ENCODE measurements at regions of chr16 and their contacts with region 1.

Region 1: GRCh38 chr16:1378804-1379303 is 27.1 kb downstream of the GNPTG start:
- DNase-seq: peak in 33 of 35 experiments; percentile 10 to 78 (median 42)
- ATAC-seq: peak; percentile 41 to 69 (median 54)
- H3K4me3 ChIP-seq: peak overlapping the region; percentile 21 to 32
- H3K4me3 Mint-ChIP-seq: peak overlapping the region; percentile 61 to 66 (median 62)
- H3K27ac ChIP-seq: no peak overlapping the region
- H3K27ac Mint-ChIP-seq: peak overlapping the region in 1 of 2 donors; percentile 58
- H3K4me1 ChIP-seq: peaks cover 3 to 20% of the 10 kb centered on the region in 2 experiments
- H3K4me1 Mint-ChIP-seq: peaks cover 15 to 20% (median 16%) of the 10 kb centered on the region in 3 donors
- H3K27me3 ChIP-seq: peaks cover 0 to 2% of the 10 kb centered on the region in 2 experiments
- H3K27me3 Mint-ChIP-seq: no peaks in the 10 kb centered on the region

Region 2: GRCh38 chr16:1119766-1120576 is 258.9 kb before region 1 on chr16:
- CTCF ChIA-PET with region 1: no interaction called
- POLR2A ChIA-PET with region 1: no interaction called
- DNase-seq: no peak
- ATAC-seq: no peak
- H3K4me3 ChIP-seq: no peak overlapping the region
- H3K4me3 Mint-ChIP-seq: no peak overlapping the region
- H3K27ac ChIP-seq: no peak overlapping the region
- H3K27ac Mint-ChIP-seq: no peak overlapping the region
- H3K4me1 ChIP-seq: no peaks in the 10 kb centered on the region
- H3K4me1 Mint-ChIP-seq: no peaks in the 10 kb centered on the region
- H3K27me3 ChIP-seq: peaks cover 0 to 61% of the 10 kb centered on the region in 2 experiments
- H3K27me3 Mint-ChIP-seq: peaks cover 0 to under 1% of the 10 kb centered on the region in 2 donors

Region 3: DNA sequence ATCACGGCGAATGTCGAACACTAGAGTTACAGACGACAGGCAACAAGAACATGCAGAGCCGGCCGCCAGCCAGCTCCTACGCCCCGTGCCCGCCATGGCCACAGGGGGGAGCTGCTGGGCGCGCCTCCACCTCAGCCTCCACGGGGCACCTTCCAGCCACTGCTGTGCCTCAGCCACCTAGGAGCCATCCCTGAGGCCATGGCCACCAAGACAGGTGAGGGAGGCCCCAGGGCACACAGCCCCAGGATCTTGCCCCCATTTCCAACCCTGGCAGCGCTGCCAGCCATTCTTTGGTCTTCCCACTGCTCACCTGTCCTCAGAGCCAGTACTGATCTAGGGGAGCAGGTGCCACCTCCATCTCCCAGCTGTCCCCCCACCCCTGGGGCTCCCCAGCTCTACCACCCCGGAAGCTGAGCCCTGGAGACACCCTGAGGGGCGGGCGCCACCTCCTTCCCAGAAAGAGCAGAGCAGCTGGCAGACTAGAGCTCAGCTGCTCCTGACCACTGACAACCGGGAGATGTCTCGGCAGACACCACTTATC is 15.3 kb before region 1 on chr16:
- CTCF ChIA-PET with region 1: interaction called, 3 to 7 read pairs
- POLR2A ChIA-PET with region 1: interaction called in 1 of 2 experiments, 12 read pairs
- DNase-seq: peak in 34 of 35 experiments; percentile 34 to 78 (median 61)
- ATAC-seq: peak; percentile 88 to 93 (median 90)
- H3K4me3 ChIP-seq: no peak overlapping the region
- H3K4me3 Mint-ChIP-seq: no peak overlapping the region
- H3K27ac ChIP-seq: no peak overlapping the region
- H3K27ac Mint-ChIP-seq: peak overlapping the region in 1 of 2 donors; percentile 58
- H3K4me1 ChIP-seq: peaks cover 0 to 4% of the 10 kb centered on the region in 2 experiments
- H3K4me1 Mint-ChIP-seq: peaks cover 0 to 5% (median 2%) of the 10 kb centered on the region in 3 donors
- H3K27me3 ChIP-seq: no peaks in the 10 kb centered on the region
- H3K27me3 Mint-ChIP-seq: no peaks in the 10 kb centered on the region

Region 4: GRCh38 chr16:1548233-1548632 is 169.4 kb after region 1 on chr16:
- CTCF ChIA-PET with region 1: no interaction called
- POLR2A ChIA-PET with region 1: interaction called in 1 of 2 experiments, 13 read pairs
- DNase-seq: no peak
- ATAC-seq: no peak
- H3K4me3 ChIP-seq: no peak overlapping the region
- H3K4me3 Mint-ChIP-seq: peak overlapping the region in 1 of 3 donors; percentile 75
- H3K27ac ChIP-seq: no peak overlapping the region
- H3K27ac Mint-ChIP-seq: peak overlapping the region; percentile 22 to 23
- H3K4me1 ChIP-seq: peaks cover 4 to 76% of the 10 kb centered on the region in 2 experiments
- H3K4me1 Mint-ChIP-seq: peaks cover 78 to 84% (median 82%) of the 10 kb centered on the region in 3 donors
- H3K27me3 ChIP-seq: no peaks in the 10 kb centered on the region
- H3K27me3 Mint-ChIP-seq: no peaks in the 10 kb centered on the region